ENCODE measurements at regions of chr17 and their contacts with region 1.

Region 1: GRCh38 chr17:56994009-56994792 is 16.3 kb downstream of the SCPEP1 start:
- DNase-seq: no peak
- ATAC-seq: peak in 3 of 8 donors; percentile 30 to 62 (median 51)
- H3K4me3 ChIP-seq: no peak overlapping the region
- H3K27ac ChIP-seq: peak overlapping the region in 1 of 10 donors; percentile 13
- H3K4me1 ChIP-seq: peaks cover 0 to 7% (median 0%) of the 10 kb centered on the region in 9 donors
- H3K27me3 ChIP-seq: no peaks in the 10 kb centered on the region
- CTCF ChIP-seq: no peak

Region 2: DNA sequence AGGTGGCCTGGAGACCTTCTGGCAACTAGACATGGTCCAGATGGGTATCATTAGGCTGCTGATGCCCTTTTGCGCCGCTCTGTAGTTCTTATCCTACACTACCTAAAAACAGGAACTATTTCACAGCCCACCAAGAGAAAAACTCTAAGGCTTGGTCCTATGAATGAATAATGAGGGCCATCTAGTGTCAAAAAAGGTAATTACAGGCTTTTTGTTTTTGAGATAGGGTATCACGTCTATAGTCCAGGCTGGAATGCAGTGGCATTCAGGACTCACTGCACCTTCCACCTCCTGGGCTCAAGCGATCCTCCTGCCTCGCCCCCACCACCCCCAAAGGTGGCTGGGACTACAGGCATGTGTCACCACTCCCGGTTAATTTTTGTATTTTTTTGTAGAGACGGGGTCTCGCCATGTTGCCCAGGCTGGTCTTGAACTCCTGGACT is 54.3 kb before region 1 on chr17:
- intact Hi-C with region 1: no loop called
- DNase-seq: no peak
- ATAC-seq: peak; percentile 37 to 71 (median 56)
- H3K4me3 ChIP-seq: no peak overlapping the region
- H3K27ac ChIP-seq: no peak overlapping the region
- H3K4me1 ChIP-seq: peaks cover 0 to 18% (median 4%) of the 10 kb centered on the region in 9 donors
- H3K27me3 ChIP-seq: no peaks in the 10 kb centered on the region
- CTCF ChIP-seq: peak; percentile 46 to 84 (median 71)

Region 3: GRCh38 chr17:57033295-57033694 is 39.1 kb after region 1 on chr17:
- intact Hi-C with region 1: no loop called
- DNase-seq: peak in 1 of 2 donors; percentile 61
- ATAC-seq: peak; percentile 72 to 92 (median 84)
- H3K4me3 ChIP-seq: no peak overlapping the region
- H3K27ac ChIP-seq: peak overlapping the region; percentile 64 to 89 (median 78)
- H3K4me1 ChIP-seq: peaks cover 0 to 44% (median 12%) of the 10 kb centered on the region in 9 donors
- H3K27me3 ChIP-seq: peaks cover 0 to 13% (median 0%) of the 10 kb centered on the region in 7 donors
- CTCF ChIP-seq: no peak

Region 4: DNA sequence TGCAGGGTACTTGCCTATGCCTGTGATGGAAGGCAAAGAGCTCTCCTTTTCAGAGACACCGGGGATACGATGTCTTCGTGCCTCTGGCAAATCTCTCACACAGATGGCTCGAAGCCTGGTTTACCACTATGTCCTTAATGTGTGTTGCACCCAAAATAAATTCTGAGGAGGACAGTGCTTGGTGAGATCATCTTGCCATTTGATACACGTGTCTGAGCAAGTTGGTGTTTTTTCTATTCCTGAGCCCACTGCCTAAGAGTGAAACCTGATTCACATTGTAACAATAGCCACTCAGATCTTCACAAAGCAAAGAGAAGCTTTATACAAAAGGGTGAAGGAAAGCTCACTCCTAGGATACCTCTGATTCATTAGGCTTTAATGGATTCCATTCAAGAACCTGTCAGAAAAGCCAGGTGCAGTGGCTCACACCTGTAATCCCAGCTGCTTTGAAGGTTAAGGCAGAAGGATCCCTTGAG is 57.7 kb after region 1 on chr17:
- intact Hi-C with region 1: loop called in 1 of 10 experiments (anchors 10 kb)
- DNase-seq: no peak
- ATAC-seq: peak in 6 of 8 donors; percentile 36 to 75 (median 66)
- H3K4me3 ChIP-seq: no peak overlapping the region
- H3K27ac ChIP-seq: peak overlapping the region in 4 of 10 donors; percentile 9 to 45 (median 36)
- H3K4me1 ChIP-seq: peaks cover 0 to 14% (median 8%) of the 10 kb centered on the region in 9 donors
- H3K27me3 ChIP-seq: peaks cover 0 to 11% (median 0%) of the 10 kb centered on the region in 7 donors
- CTCF ChIP-seq: no peak